ENCODE measurements at regions of chr2 and their contacts with region 1.

Region 1: GRCh38 chr2:220555961-220556360 is 928.5 kb downstream of the SLC4A3 start:
- H3K4me3 ChIP-seq: no peak overlapping the region
- H3K27ac ChIP-seq: no peak overlapping the region
- H3K4me1 ChIP-seq: no peaks in the 10 kb centered on the region
- CTCF ChIP-seq: no peak

Region 2: DNA sequence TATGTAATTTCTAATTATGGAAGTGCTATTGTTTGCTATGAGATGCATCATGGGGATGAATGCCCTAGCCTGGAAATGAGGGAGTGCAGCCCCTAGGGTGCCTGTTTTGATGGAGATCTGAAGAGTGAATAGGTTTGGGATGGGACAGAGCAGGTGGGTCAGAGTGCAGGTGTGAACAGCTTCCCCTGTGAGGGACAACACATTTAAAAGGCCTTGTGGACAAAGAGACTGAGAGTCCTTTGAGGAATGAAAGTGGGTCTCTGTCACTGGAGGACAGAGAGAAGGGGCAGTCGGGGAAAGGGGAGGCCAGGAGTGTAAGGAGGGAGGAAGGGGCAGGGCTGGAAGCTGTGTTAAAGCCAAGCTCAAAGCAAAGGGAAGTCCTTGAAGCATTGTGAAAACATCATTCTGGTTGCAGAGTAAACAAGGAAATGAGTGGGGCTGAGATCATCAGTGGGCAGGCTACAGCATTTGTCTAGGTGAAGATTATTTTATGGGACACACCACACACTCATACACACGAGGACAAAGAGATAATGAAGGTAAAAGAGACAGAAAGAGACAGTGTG is 50.9 kb before region 1 on chr2:
- CTCF ChIA-PET with region 1: no interaction called
- POLR2A ChIA-PET with region 1: no interaction called
- H3K4me3 ChIP-seq: no peak overlapping the region
- H3K27ac ChIP-seq: no peak overlapping the region
- H3K4me1 ChIP-seq: no peaks in the 10 kb centered on the region
- CTCF ChIP-seq: no peak

Region 3: GRCh38 chr2:220586980-220587530 is 31.1 kb after region 1 on chr2:
- CTCF ChIA-PET with region 1: no interaction called
- POLR2A ChIA-PET with region 1: interaction called, 11 read pairs
- H3K4me3 ChIP-seq: no peak overlapping the region
- H3K27ac ChIP-seq: no peak overlapping the region
- H3K4me1 ChIP-seq: no peaks in the 10 kb centered on the region
- CTCF ChIP-seq: no peak